Heart left ventricle (tissue), 16 donors: ENCODE measurements at regions of chr14 and their contacts with region 1.

Region 1: DNA sequence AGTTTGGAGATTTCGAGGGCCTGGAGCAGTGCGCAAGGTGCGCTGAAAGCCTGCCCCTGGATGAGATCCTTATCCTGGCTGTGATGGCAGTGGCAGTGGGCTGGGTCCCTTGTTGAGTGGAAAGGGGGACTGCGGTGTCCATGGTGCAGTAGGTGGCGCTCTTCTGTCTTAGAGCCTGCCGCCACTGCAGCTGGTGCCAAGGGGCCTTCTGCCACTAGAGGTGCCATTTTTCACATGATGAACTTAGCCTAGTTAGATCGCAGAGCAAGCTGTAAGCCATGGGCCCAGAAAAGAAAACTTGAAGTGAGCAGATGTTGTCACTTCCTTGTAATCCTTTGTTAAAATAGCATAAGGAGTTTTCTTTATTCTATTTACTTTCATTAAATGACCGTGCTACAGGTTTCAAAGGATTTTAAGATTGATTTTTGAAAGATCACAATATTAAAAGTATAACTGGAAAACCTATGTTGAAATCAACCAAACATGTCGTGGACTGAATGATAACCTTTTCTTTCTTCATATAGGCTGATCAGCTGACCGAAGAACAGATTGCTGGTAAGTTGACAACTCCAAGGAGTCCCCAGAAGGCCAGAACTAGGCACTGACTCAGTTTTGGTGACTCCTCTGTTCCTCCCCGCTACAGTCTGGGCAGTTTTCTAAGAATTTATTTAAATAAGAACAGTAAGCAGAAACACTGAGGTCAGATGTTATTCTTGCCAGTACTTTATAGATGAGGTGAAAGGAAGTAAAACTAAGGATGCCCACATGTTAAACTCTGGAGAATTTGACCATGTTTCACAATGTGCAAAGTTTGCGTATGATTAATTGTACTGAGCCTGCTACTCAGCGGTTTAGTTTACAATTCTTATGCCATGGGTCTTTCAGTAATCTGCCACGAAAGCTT is 3.0 kb downstream of the CALM1 start:
- DNase-seq: peak; percentile 90 to 93 (median 92)
- ATAC-seq: peak; percentile 70 to 85 (median 77)
- H3K4me3 ChIP-seq: peak overlapping the region in 11 of 12 donors; percentile 68 to 100 (median 98)
- H3K27ac ChIP-seq: peak overlapping the region in 11 of 12 donors; percentile 43 to 96 (median 93)
- H3K4me1 ChIP-seq: peaks cover 20 to 62% (median 49%) of the 10 kb centered on the region in 12 donors
- H3K27me3 ChIP-seq: no peaks in the 10 kb centered on the region
- CTCF ChIP-seq: peak; percentile 97 to 100 (median 99)
- POLR2A ChIP-seq: no peak

Region 2: GRCh38 chr14:90301668-90302090 is 98.1 kb before region 1 on chr14:
- intact Hi-C with region 1: loop called in 6 of 10 experiments (anchors 5 to 10 kb)
- DNase-seq: no peak
- ATAC-seq: peak; percentile 23 to 70 (median 42)
- H3K4me3 ChIP-seq: no peak overlapping the region
- H3K27ac ChIP-seq: peak overlapping the region in 11 of 12 donors; percentile 11 to 73 (median 42)
- H3K4me1 ChIP-seq: peaks cover 5 to 43% (median 16%) of the 10 kb centered on the region in 12 donors
- H3K27me3 ChIP-seq: no peaks in the 10 kb centered on the region
- CTCF ChIP-seq: peak; percentile 30 to 74 (median 60)
- POLR2A ChIP-seq: no peak

Region 3: DNA sequence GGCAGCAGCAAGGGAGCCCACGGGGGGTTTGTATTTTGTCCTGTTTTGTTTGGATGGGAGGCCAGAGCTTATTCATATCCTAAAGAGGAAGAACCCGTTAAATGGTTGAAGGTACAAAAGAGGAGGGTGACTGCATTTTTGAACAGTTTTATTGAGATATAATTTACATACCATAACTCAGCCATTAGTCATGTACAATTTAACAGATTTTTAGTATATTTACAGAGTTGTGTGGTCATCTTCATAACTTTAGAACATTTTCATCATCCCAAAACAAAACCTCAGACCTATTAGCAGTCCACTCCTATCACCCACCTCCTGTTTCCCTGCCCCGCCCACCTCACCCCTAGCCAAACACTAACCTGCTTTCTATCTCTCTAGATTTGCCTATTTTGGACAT is 80.6 kb before region 1 on chr14:
- intact Hi-C with region 1: no loop called
- DNase-seq: no peak
- ATAC-seq: no peak
- H3K4me3 ChIP-seq: no peak overlapping the region
- H3K27ac ChIP-seq: no peak overlapping the region
- H3K4me1 ChIP-seq: peaks cover 0 to 3% (median 0%) of the 10 kb centered on the region in 12 donors
- H3K27me3 ChIP-seq: no peaks in the 10 kb centered on the region
- CTCF ChIP-seq: no peak
- POLR2A ChIP-seq: no peak

Region 4: GRCh38 chr14:90383075-90383730 is 16.6 kb before region 1 on chr14:
- intact Hi-C with region 1: loop called in 8 of 10 experiments (anchors 1 to 2 kb)
- DNase-seq: peak; percentile 100
- ATAC-seq: peak; percentile 93 to 98 (median 96)
- H3K4me3 ChIP-seq: peak overlapping the region; percentile 47 to 80 (median 66)
- H3K27ac ChIP-seq: peak overlapping the region; percentile 98 to 100 (median 99)
- H3K4me1 ChIP-seq: peaks cover 4 to 44% (median 27%) of the 10 kb centered on the region in 12 donors
- H3K27me3 ChIP-seq: no peaks in the 10 kb centered on the region
- CTCF ChIP-seq: peak in 7 of 12 donors; percentile 10 to 31 (median 25)
- POLR2A ChIP-seq: peak; percentile 31 to 91

Region 5: GRCh38 chr14:90518941-90519256 is 119.1 kb after region 1 on chr14:
- intact Hi-C with region 1: loop called in 8 of 10 experiments (anchors 5 to 10 kb)
- DNase-seq: peak in 3 of 5 donors; percentile 25 to 48 (median 26)
- ATAC-seq: no peak
- H3K4me3 ChIP-seq: no peak overlapping the region
- H3K27ac ChIP-seq: peak overlapping the region in 2 of 12 donors; percentile 8 to 83
- H3K4me1 ChIP-seq: peaks cover 0 to 66% (median 39%) of the 10 kb centered on the region in 12 donors
- H3K27me3 ChIP-seq: no peaks in the 10 kb centered on the region
- CTCF ChIP-seq: peak; percentile 32 to 64 (median 40)
- POLR2A ChIP-seq: no peak

Region 6: GRCh38 chr14:90611936-90612335 is 212.1 kb after region 1 on chr14:
- intact Hi-C with region 1: loop called in 2 of 10 experiments (anchors 5 to 10 kb)
- DNase-seq: no peak
- ATAC-seq: peak in 1 of 4 donors; percentile 41
- H3K4me3 ChIP-seq: no peak overlapping the region
- H3K27ac ChIP-seq: peak overlapping the region in 10 of 12 donors; percentile 8 to 77 (median 54)
- H3K4me1 ChIP-seq: peaks cover 0 to 70% (median 42%) of the 10 kb centered on the region in 12 donors
- H3K27me3 ChIP-seq: no peaks in the 10 kb centered on the region
- CTCF ChIP-seq: no peak
- POLR2A ChIP-seq: no peak

Region 7: GRCh38 chr14:90758028-90758889 is 358.5 kb after region 1 on chr14:
- intact Hi-C with region 1: loop called in 8 of 10 experiments (anchors 2 to 10 kb)
- DNase-seq: peak; percentile 92 to 98 (median 95)
- ATAC-seq: peak; percentile 75 to 92 (median 91)
- H3K4me3 ChIP-seq: peak overlapping the region; percentile 15 to 74 (median 61)
- H3K27ac ChIP-seq: peak overlapping the region; percentile 91 to 98 (median 94)
- H3K4me1 ChIP-seq: peaks cover 0 to 31% (median 22%) of the 10 kb centered on the region in 12 donors
- H3K27me3 ChIP-seq: no peaks in the 10 kb centered on the region
- CTCF ChIP-seq: peak; percentile 81 to 97 (median 92)
- POLR2A ChIP-seq: peak in 1 of 2 donors; percentile 57